ENCODE measurements at regions of chr1 and their contacts with region 1.

Region 1: GRCh38 chr1:185317034-185317885 is at the start of gene IVNS1ABP:
- DNase-seq: peak; percentile 97
- H3K4me3 Mint-ChIP-seq: peak within 1 kb of the TSS; percentile 99
- H3K27ac Mint-ChIP-seq: peak within 1 kb of the TSS; percentile 92
- H3K4me1 Mint-ChIP-seq: peaks cover 43% of the 10 kb centered on the region
- H3K27me3 Mint-ChIP-seq: no peaks in the 10 kb centered on the region
- CTCF ChIP-seq: no peak
- total RNA-seq, gene IVNS1ABP: 121 and 135 TPM in 2 replicates

Region 2: GRCh38 chr1:185409763-185410528 is 92.7 kb after region 1 on chr1:
- CTCF ChIA-PET with region 1: no interaction called
- intact Hi-C with region 1: loop called (anchors 2 kb)
- DNase-seq: peak; percentile 13
- H3K4me3 Mint-ChIP-seq: no peak overlapping the region
- H3K27ac Mint-ChIP-seq: no peak overlapping the region
- H3K4me1 Mint-ChIP-seq: peaks cover 24% of the 10 kb centered on the region
- H3K27me3 Mint-ChIP-seq: no peaks in the 10 kb centered on the region
- CTCF ChIP-seq: no peak

Region 3: GRCh38 chr1:185491604-185492003 is 174.3 kb after region 1 on chr1:
- CTCF ChIA-PET with region 1: no interaction called
- intact Hi-C with region 1: loop called (anchors 2 kb)
- DNase-seq: no peak
- H3K4me3 Mint-ChIP-seq: no peak overlapping the region
- H3K27ac Mint-ChIP-seq: no peak overlapping the region
- H3K4me1 Mint-ChIP-seq: peaks cover 24% of the 10 kb centered on the region
- H3K27me3 Mint-ChIP-seq: no peaks in the 10 kb centered on the region
- CTCF ChIP-seq: no peak

Region 4: GRCh38 chr1:185566995-185567394 is 249.7 kb after region 1 on chr1:
- CTCF ChIA-PET with region 1: interaction called, 18 read pairs
- intact Hi-C with region 1: loop called (anchors 5 kb)
- DNase-seq: peak; percentile 28
- H3K4me3 Mint-ChIP-seq: peak overlapping the region; percentile 14
- H3K27ac Mint-ChIP-seq: peak overlapping the region; percentile 91
- H3K4me1 Mint-ChIP-seq: peaks cover 83% of the 10 kb centered on the region
- H3K27me3 Mint-ChIP-seq: no peaks in the 10 kb centered on the region
- CTCF ChIP-seq: no peak

Region 5: GRCh38 chr1:185646202-185646683 is 329.0 kb after region 1 on chr1:
- CTCF ChIA-PET with region 1: interaction called, 11 read pairs
- intact Hi-C with region 1: no loop called
- DNase-seq: peak; percentile 80
- H3K4me3 Mint-ChIP-seq: peak overlapping the region; percentile 6
- H3K27ac Mint-ChIP-seq: peak overlapping the region; percentile 30
- H3K4me1 Mint-ChIP-seq: peaks cover 53% of the 10 kb centered on the region
- H3K27me3 Mint-ChIP-seq: no peaks in the 10 kb centered on the region
- CTCF ChIP-seq: no peak

Region 6: DNA sequence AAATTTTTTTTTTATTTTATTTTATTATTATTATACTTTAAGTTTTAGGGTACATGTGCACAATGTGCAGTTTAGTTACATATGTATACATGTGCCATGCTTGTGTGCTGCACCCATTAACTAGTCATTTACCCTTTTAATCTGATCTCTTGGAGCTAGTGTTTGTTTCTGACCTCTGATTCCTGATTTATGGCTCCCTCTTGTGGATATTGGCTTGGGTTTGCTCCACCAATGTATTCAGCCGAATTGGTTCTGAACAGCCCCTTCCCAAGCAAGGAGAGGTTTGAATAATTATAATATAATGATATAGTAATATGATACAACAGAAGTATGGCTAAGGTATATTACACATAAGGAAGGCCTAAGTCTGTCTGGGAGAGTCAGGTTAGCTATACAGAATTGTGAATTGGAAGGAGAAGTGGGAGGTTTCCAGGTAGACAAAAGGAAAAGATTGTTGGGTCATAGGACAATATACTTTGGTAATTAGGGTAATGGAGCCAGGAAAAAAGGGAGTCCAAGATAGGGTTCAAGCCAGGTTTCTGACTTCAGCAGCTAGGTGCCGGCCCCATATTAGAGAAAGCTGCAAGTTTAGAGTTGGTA is 363.9 kb after region 1 on chr1:
- CTCF ChIA-PET with region 1: interaction called, 21 read pairs
- intact Hi-C with region 1: no loop called
- DNase-seq: peak; percentile 56
- H3K4me3 Mint-ChIP-seq: no peak overlapping the region
- H3K27ac Mint-ChIP-seq: no peak overlapping the region
- H3K4me1 Mint-ChIP-seq: no peaks in the 10 kb centered on the region
- H3K27me3 Mint-ChIP-seq: no peaks in the 10 kb centered on the region
- CTCF ChIP-seq: peak; percentile 59

Region 7: DNA sequence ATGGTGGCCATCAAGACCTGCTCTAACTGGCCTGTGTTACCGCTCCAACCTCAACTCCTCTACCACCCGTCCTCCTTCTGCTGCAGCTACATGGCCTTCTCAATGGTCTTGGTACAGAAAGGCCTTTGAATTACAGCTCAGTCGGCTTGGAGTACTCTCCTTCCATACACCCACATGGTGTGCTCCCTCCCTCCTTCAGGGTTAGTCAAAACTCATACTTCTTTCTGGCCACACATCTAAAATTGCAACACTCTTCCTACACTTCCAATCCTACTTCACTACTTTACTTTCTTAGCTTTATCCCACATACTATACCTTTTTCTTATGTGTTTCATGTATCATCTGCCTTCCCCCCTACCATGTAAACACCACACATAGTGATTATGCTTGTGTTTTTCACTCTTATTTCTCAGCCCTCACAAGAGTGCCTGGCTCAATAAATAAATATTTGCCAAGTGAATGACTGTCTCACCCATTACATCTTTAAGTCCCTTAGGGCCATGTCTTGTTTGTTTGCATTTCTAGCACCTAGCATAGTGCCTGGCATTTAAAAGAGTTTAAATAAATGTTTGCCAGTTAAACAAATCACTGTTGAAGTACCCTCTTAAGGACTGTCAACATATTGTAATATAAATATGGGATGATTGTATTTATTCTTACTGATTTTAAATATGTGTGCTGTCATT is 379.3 kb after region 1 on chr1:
- CTCF ChIA-PET with region 1: no interaction called
- intact Hi-C with region 1: no loop called
- DNase-seq: no peak
- H3K4me3 Mint-ChIP-seq: no peak overlapping the region
- H3K27ac Mint-ChIP-seq: no peak overlapping the region
- H3K4me1 Mint-ChIP-seq: peaks cover 9% of the 10 kb centered on the region
- H3K27me3 Mint-ChIP-seq: peaks cover 14% of the 10 kb centered on the region
- CTCF ChIP-seq: no peak